CD4-positive, alpha-beta T cell (primary cell): ENCODE measurements at regions of chr4 and their contacts with region 1.

Region 1: DNA sequence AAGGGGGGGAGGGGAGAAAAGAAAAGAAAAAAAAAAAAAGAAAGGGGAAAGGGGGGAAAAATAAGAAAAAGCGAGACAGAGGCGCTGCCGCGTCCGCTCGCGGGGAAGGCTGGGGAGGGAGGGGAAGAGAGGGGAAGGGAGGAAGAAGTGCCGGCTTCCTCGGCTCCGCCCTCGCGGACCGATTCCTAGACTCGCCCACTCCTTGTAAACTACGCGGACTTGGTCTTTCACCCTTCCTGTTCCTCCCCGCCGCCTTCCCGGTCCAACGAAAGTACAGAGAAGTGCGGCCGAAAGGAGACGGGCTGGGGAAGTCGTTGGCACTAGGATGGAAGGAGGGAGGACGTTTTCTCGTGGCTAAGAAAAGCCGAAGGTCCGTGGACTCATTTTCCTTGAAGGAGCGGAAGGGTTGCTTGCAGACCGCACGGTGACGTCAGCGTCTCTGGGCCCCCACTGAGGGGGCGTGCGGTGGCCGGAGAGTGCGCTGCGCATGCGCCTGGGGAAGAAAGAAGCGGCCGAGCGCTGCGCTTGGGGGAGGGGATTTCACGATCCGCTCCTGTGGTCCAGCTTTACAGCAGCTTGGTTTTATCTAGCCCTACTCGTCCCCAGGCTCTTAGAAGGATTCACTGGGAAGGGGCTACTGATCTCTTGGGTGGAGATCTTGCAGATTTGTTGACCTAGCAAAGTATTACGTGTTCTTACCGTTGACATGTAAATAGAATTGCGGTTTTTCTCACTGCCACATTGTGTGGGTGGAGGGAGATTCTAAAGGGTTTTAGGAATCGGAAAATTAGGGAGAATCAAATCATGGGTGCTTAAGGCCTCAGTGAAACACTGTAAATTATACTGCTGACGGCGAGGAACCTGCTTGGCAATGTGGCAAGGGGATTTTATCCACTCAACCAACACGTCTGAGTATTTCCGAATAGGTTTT is at the start of gene CCNI:
- DNase-seq: peak; percentile 85 to 97 (median 90)
- ATAC-seq: peak; percentile 65
- H3K4me3 ChIP-seq: peak within 1 kb of the TSS; percentile 77
- H3K4me3 Mint-ChIP-seq: peak within 1 kb of the TSS; percentile 94
- H3K27ac ChIP-seq: peak within 1 kb of the TSS; percentile 99 to 100
- H3K27ac Mint-ChIP-seq: no peak within 1 kb of the TSS
- H3K4me1 ChIP-seq: peaks cover 21% of the 10 kb centered on the region
- H3K4me1 Mint-ChIP-seq: peaks cover 35% of the 10 kb centered on the region
- H3K27me3 ChIP-seq: no peaks in the 10 kb centered on the region
- H3K27me3 Mint-ChIP-seq: no peaks in the 10 kb centered on the region
- CTCF ChIP-seq: no peak
- total RNA-seq, gene CCNI: 385 to 418 TPM

Region 2: DNA sequence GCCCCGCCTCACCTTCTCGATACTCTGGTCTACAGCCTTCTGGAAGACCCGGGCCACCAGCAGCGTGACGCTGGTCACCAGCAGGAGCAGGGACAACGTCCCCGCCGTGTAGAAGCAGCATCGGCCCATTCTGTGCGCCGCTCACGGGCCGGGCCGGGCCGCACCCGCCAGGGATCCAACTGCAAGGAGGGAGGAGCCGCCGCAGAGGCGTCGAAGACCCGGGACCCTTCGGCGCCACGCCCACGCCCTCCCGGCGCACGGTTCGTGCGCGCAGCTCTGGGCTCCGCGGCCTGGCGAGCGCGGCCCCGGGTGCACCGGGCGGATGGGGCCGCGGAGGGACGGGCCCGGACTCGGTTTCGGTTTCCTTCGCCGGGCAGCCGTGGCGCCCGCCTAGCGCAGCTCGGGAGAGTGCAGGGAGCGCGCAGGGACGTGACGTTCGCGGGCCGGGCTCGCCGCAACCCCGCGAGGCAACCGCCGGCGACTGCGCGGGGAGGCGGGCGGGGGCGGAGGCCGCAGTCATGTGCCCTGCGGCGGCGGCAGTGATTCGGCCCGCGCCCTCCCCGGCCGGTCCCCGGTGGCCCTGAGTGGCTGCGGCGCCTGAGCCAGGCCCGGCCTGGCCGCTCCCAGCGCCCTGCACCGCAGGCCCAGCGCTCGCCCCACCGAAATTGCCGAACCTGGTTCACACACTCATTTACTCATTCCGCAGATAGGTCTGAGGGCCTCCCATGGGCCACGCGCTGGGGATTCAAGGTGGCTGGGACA is 862.5 kb before region 1 on chr4 and contains the start of gene SCARB2:
- CTCF ChIA-PET with region 1: no interaction called
- POLR2A ChIA-PET with region 1: no interaction called
- intact Hi-C with region 1: loop called in 1 of 2 experiments (anchors 10 kb)
- DNase-seq: peak; percentile 40 to 92 (median 66)
- ATAC-seq: peak; percentile 61
- H3K4me3 ChIP-seq: peak within 1 kb of the TSS; percentile 83
- H3K4me3 Mint-ChIP-seq: peak within 1 kb of the TSS; percentile 92
- H3K27ac ChIP-seq: peak within 1 kb of the TSS; percentile 76 to 82
- H3K27ac Mint-ChIP-seq: peak within 1 kb of the TSS; percentile 95
- H3K4me1 ChIP-seq: peaks cover 44% of the 10 kb centered on the region
- H3K4me1 Mint-ChIP-seq: peaks cover 56% of the 10 kb centered on the region
- H3K27me3 ChIP-seq: no peaks in the 10 kb centered on the region
- H3K27me3 Mint-ChIP-seq: no peaks in the 10 kb centered on the region
- CTCF ChIP-seq: no peak
- total RNA-seq, gene SCARB2: 34.4 to 36.0 TPM

Region 3: DNA sequence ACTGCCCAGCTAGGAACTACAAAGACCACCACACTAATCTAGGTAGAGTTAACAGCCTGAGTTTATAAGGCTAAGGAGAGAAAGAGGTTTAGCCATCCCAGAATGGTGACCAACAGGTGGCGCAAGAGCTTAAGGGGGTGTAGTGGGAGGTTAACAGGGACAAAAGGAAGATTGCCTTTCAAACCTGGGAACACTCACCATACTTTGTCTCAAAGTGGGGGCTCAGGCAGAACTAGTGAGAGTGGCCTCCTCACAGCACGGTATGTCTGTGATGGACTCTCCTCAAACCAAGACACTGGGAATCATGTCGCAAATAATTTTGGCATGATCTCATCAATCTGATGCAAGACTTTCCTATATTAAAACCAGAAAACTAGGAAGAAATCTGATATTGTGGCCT is 23.8 kb before region 1 on chr4:
- CTCF ChIA-PET with region 1: interaction called, 8 read pairs
- POLR2A ChIA-PET with region 1: interaction called, 3 read pairs
- intact Hi-C with region 1: loop called in 1 of 2 experiments (anchors 2 kb)
- DNase-seq: peak; percentile 35 to 77 (median 60)
- ATAC-seq: peak; percentile 54
- H3K4me3 ChIP-seq: no peak overlapping the region
- H3K4me3 Mint-ChIP-seq: no peak overlapping the region
- H3K27ac ChIP-seq: no peak overlapping the region
- H3K27ac Mint-ChIP-seq: peak overlapping the region; percentile 56
- H3K4me1 ChIP-seq: no peaks in the 10 kb centered on the region
- H3K4me1 Mint-ChIP-seq: peaks cover 8% of the 10 kb centered on the region
- H3K27me3 ChIP-seq: no peaks in the 10 kb centered on the region
- H3K27me3 Mint-ChIP-seq: no peaks in the 10 kb centered on the region
- CTCF ChIP-seq: peak; percentile 29

Region 4: GRCh38 chr4:77193511-77194102 is 117.5 kb after region 1 on chr4:
- CTCF ChIA-PET with region 1: no interaction called
- POLR2A ChIA-PET with region 1: interaction called, 11 read pairs
- intact Hi-C with region 1: no loop called
- DNase-seq: peak; percentile 49 to 88 (median 69)
- ATAC-seq: peak; percentile 99
- H3K4me3 ChIP-seq: peak overlapping the region; percentile 51
- H3K4me3 Mint-ChIP-seq: peak overlapping the region; percentile 88
- H3K27ac ChIP-seq: peak overlapping the region in 1 of 2 donors; percentile 68
- H3K27ac Mint-ChIP-seq: peak overlapping the region; percentile 89
- H3K4me1 ChIP-seq: peaks cover 17% of the 10 kb centered on the region
- H3K4me1 Mint-ChIP-seq: peaks cover 24% of the 10 kb centered on the region
- H3K27me3 ChIP-seq: no peaks in the 10 kb centered on the region
- H3K27me3 Mint-ChIP-seq: no peaks in the 10 kb centered on the region
- CTCF ChIP-seq: no peak

Region 5: DNA sequence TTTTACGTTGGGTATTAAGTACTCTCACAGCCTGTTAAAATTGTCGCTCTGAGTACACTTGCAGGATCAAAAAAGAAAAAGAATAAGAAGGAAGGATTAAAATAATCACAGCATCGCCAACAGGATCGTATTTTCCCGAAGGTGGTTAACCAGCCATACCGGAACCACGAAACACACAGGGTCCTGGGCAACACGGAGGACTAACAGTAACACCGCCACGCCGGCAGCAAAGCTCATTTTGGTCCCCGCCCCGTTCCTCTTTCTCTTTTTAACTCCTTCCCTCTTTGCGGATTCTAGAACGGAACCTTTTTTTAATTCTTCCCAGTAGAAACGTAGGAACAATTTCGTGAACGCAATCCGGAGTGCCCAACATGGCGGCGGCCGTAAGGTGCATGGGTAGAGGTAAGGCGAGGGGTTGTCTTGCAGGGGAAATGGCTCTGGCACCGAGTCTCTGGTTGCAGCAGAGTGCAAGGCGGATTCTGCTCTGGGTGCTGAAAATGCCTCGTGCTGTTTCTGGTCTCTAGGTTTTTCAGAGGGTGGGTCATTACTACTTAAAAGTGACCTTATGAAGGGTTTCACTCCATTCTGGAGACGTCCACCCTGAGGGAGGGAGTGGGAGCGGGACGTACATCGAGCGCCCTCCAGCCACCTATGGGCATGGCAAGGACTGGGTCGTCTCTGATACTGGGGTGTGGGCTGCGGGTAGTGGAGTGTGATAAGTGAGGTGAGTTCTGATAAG is 786.5 kb after region 1 on chr4 and contains the start of gene MRPL1:
- CTCF ChIA-PET with region 1: no interaction called
- POLR2A ChIA-PET with region 1: interaction called, 12 read pairs
- intact Hi-C with region 1: loop called in 1 of 2 experiments (anchors 5 kb)
- DNase-seq: peak; percentile 78 to 96 (median 85)
- ATAC-seq: peak; percentile 77
- H3K4me3 ChIP-seq: peak within 1 kb of the TSS; percentile 77
- H3K4me3 Mint-ChIP-seq: peak within 1 kb of the TSS; percentile 91
- H3K27ac ChIP-seq: peak within 1 kb of the TSS; percentile 99
- H3K27ac Mint-ChIP-seq: peak within 1 kb of the TSS; percentile 99
- H3K4me1 ChIP-seq: peaks cover 42% of the 10 kb centered on the region
- H3K4me1 Mint-ChIP-seq: peaks cover 66% of the 10 kb centered on the region
- H3K27me3 ChIP-seq: no peaks in the 10 kb centered on the region
- H3K27me3 Mint-ChIP-seq: peaks cover 7% of the 10 kb centered on the region
- CTCF ChIP-seq: no peak
- total RNA-seq, gene MRPL1: 14.8 to 17.5 TPM

Region 6: GRCh38 chr4:78938868-78939666 is 1862.9 kb after region 1 on chr4 and contains the start of gene PAQR3:
- CTCF ChIA-PET with region 1: no interaction called
- POLR2A ChIA-PET with region 1: no interaction called
- intact Hi-C with region 1: loop called in 1 of 2 experiments (anchors 5 kb)
- DNase-seq: peak; percentile 73 to 94 (median 82)
- ATAC-seq: peak; percentile 96
- H3K4me3 ChIP-seq: peak within 1 kb of the TSS; percentile 87
- H3K4me3 Mint-ChIP-seq: peak within 1 kb of the TSS; percentile 93
- H3K27ac ChIP-seq: no peak within 1 kb of the TSS
- H3K27ac Mint-ChIP-seq: peak within 1 kb of the TSS; percentile 82
- H3K4me1 ChIP-seq: peaks cover 24% of the 10 kb centered on the region
- H3K4me1 Mint-ChIP-seq: peaks cover 44% of the 10 kb centered on the region
- H3K27me3 ChIP-seq: no peaks in the 10 kb centered on the region
- H3K27me3 Mint-ChIP-seq: peaks cover 13% of the 10 kb centered on the region
- CTCF ChIP-seq: no peak
- total RNA-seq, gene PAQR3: 29.5 to 30.7 TPM